ENCODE measurements at regions of chr1 and their contacts with region 1.

Region 1: GRCh38 chr1:170881268-170882265 is 53.8 kb upstream of the MROH9 start:
- DNase-seq: peak; percentile 19
- H3K4me3 Mint-ChIP-seq: no peak overlapping the region
- H3K27ac Mint-ChIP-seq: no peak overlapping the region
- H3K4me1 Mint-ChIP-seq: peaks cover 6% of the 10 kb centered on the region
- H3K27me3 Mint-ChIP-seq: no peaks in the 10 kb centered on the region
- CTCF ChIP-seq: peak; percentile 43

Region 2: GRCh38 chr1:169928438-169929209 is 952.9 kb before region 1 on chr1:
- CTCF ChIA-PET with region 1: no interaction called
- intact Hi-C with region 1: loop called (anchors 1 kb)
- DNase-seq: no peak
- H3K4me3 Mint-ChIP-seq: no peak overlapping the region
- H3K27ac Mint-ChIP-seq: no peak overlapping the region
- H3K4me1 Mint-ChIP-seq: peaks cover 15% of the 10 kb centered on the region
- H3K27me3 Mint-ChIP-seq: no peaks in the 10 kb centered on the region
- CTCF ChIP-seq: peak; percentile 53

Region 3: GRCh38 chr1:170010443-170010842 is 871.1 kb before region 1 on chr1:
- CTCF ChIA-PET with region 1: no interaction called
- intact Hi-C with region 1: loop called (anchors 1 kb)
- DNase-seq: peak; percentile 65
- H3K4me3 Mint-ChIP-seq: no peak overlapping the region
- H3K27ac Mint-ChIP-seq: no peak overlapping the region
- H3K4me1 Mint-ChIP-seq: no peaks in the 10 kb centered on the region
- H3K27me3 Mint-ChIP-seq: no peaks in the 10 kb centered on the region
- CTCF ChIP-seq: peak; percentile 46

Region 4: DNA sequence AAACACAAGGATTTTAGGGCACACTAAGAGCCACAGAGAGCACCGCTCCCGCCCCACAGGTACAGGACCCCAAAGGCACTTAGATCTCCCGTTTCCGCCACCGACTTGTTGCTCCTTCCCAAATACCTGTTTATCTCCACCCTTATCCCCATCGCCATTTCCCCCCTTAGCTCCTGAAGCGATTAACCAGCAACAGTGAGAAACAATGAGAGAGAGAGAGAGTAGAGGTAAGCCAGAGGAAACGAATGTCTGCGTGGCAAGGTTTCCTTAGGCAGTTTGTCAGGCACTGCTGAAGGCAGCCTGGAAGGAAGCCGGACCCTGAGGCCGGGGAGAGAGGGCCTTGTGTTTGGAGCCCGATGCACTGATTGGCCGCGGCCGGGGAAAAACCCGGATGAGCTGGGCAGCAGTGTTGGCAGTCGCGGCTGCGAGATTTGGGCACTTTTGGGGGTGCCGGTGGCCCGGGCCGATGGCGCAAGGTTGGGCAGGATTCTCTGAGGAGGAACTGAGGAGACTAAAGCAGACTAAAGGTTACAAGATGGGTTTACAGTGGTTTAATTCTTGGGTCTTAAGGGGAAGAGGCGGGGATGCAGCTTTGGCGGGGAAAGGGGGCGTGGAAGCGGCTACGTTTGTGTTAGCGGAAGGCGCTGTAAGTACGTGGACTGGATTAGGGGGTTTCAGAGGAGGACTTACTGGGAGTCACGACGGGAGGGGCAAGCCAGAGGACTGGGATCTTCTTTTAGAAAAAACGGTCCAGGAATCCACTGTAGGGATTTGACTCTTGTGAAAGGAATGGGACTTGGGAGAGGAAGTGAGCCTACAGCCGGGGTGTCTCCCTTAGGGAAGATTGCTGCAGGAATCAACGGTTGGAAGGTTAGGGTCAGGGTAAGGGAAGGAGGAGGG is 349.6 kb before region 1 on chr1 and contains the start of gene GORAB:
- CTCF ChIA-PET with region 1: no interaction called
- intact Hi-C with region 1: loop called (anchors 10 kb)
- DNase-seq: peak; percentile 93
- H3K4me3 Mint-ChIP-seq: no peak within 1 kb of the TSS
- H3K27ac Mint-ChIP-seq: no peak within 1 kb of the TSS
- H3K4me1 Mint-ChIP-seq: peaks cover 20% of the 10 kb centered on the region
- H3K27me3 Mint-ChIP-seq: no peaks in the 10 kb centered on the region
- CTCF ChIP-seq: no peak
- total RNA-seq, gene GORAB: 20.5 and 20.9 TPM in 2 replicates

Region 5: GRCh38 chr1:170685166-170685565 is 196.4 kb before region 1 on chr1:
- CTCF ChIA-PET with region 1: interaction called, 3 read pairs
- intact Hi-C with region 1: loop called (anchors 2 kb)
- DNase-seq: no peak
- H3K4me3 Mint-ChIP-seq: no peak overlapping the region
- H3K27ac Mint-ChIP-seq: no peak overlapping the region
- H3K4me1 Mint-ChIP-seq: peaks cover 10% of the 10 kb centered on the region
- H3K27me3 Mint-ChIP-seq: no peaks in the 10 kb centered on the region
- CTCF ChIP-seq: no peak

Region 6: GRCh38 chr1:170790175-170790574 is 91.4 kb before region 1 on chr1:
- CTCF ChIA-PET with region 1: no interaction called
- intact Hi-C with region 1: loop called (anchors 5 kb)
- DNase-seq: no peak
- H3K4me3 Mint-ChIP-seq: no peak overlapping the region
- H3K27ac Mint-ChIP-seq: no peak overlapping the region
- H3K4me1 Mint-ChIP-seq: no peaks in the 10 kb centered on the region
- H3K27me3 Mint-ChIP-seq: no peaks in the 10 kb centered on the region
- CTCF ChIP-seq: no peak

Region 7: GRCh38 chr1:170978371-170978910 is 96.9 kb after region 1 on chr1:
- CTCF ChIA-PET with region 1: no interaction called
- intact Hi-C with region 1: no loop called
- DNase-seq: no peak
- H3K4me3 Mint-ChIP-seq: no peak overlapping the region
- H3K27ac Mint-ChIP-seq: no peak overlapping the region
- H3K4me1 Mint-ChIP-seq: no peaks in the 10 kb centered on the region
- H3K27me3 Mint-ChIP-seq: peaks cover 27% of the 10 kb centered on the region
- CTCF ChIP-seq: no peak

Measured in Calu3 (cell line).